K562 (cell line): ENCODE measurements at regions of chr15 and their contacts with region 1.

Region 1: GRCh38 chr15:50315814-50316630 is 39.0 kb downstream of the GABPB1 start:
- DNase-seq: peak in 3 of 4 experiments; percentile 16 to 59 (median 19)
- ATAC-seq: peak; percentile 80
- H3K4me3 ChIP-seq: no peak overlapping the region
- H3K27ac ChIP-seq: no peak overlapping the region
- H3K4me1 ChIP-seq: no peaks in the 10 kb centered on the region
- H3K27me3 ChIP-seq: no peaks in the 10 kb centered on the region
- CTCF ChIP-seq: peak; percentile 49 to 78 (median 59); a peak in 5 of 6 replicates
- EP300 ChIP-seq: no peak
- POLR2A ChIP-seq: no peak
- RAD21 ChIP-seq: peak; percentile 91 to 92

Region 2: DNA sequence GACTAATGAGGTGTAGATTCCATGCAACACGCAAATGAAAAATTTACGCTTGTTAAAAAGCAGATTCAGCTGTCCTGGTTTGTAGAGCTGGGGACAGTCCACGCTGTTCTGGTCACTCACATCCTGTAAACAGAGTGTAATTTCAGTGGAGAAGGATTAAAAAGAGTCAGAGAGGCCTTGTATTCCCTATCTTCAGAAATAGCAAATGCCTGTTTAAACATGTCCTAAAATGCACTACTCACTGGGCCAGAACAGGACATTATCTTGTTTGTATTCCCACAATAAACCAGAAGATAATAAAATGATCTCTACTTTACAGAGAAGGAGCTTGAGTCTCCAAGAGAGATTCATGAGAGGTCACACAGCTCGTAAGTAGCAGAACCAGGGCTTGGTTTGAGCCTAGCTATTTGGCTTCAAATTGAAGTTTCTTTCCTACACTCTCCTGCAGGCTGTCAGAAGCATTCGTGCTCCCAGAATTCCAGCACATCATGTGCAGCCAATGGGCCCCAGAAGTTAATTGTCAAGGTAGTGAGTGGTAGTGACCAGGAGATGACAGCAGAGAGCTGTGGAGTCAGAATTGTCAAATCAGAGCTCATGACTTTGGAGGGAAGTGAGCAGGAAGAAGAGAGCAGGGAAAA is 439.5 kb before region 1 on chr15:
- CTCF ChIA-PET with region 1: no interaction called
- POLR2A ChIA-PET with region 1: no interaction called
- in situ Hi-C with region 1: loop called (anchors 25 kb)
- intact Hi-C with region 1: no loop called
- DNase-seq: peak in 2 of 4 experiments; percentile 6 to 8
- ATAC-seq: peak; percentile 40; the same call in 2 of the 3 replicates
- H3K4me3 ChIP-seq: no peak overlapping the region
- H3K27ac ChIP-seq: no peak overlapping the region
- H3K4me1 ChIP-seq: no peaks in the 10 kb centered on the region
- H3K27me3 ChIP-seq: no peaks in the 10 kb centered on the region
- CTCF ChIP-seq: peak; percentile 33 to 52 (median 38); a peak in 4 of 6 replicates
- EP300 ChIP-seq: no peak
- POLR2A ChIP-seq: no peak
- RAD21 ChIP-seq: peak; percentile 60 to 69

Region 3: GRCh38 chr15:50182219-50183013 is 133.6 kb before region 1 on chr15:
- CTCF ChIA-PET with region 1: interaction called, 4 read pairs
- POLR2A ChIA-PET with region 1: no interaction called
- in situ Hi-C with region 1: no loop called
- intact Hi-C with region 1: loop called (anchors 2 kb)
- DNase-seq: peak in 3 of 4 experiments; percentile 40 to 50 (median 46)
- ATAC-seq: peak; percentile 80
- H3K4me3 ChIP-seq: peak overlapping the region; percentile 65
- H3K27ac ChIP-seq: peak overlapping the region; percentile 38; the same call in 1 of the 3 replicates
- H3K4me1 ChIP-seq: peaks cover 16 to 21% of the 10 kb centered on the region in 2 experiments; a peak in 4 of 5 replicates
- H3K27me3 ChIP-seq: no peaks in the 10 kb centered on the region
- CTCF ChIP-seq: no peak
- EP300 ChIP-seq: no peak
- POLR2A ChIP-seq: no peak
- RAD21 ChIP-seq: no peak

Region 4: DNA sequence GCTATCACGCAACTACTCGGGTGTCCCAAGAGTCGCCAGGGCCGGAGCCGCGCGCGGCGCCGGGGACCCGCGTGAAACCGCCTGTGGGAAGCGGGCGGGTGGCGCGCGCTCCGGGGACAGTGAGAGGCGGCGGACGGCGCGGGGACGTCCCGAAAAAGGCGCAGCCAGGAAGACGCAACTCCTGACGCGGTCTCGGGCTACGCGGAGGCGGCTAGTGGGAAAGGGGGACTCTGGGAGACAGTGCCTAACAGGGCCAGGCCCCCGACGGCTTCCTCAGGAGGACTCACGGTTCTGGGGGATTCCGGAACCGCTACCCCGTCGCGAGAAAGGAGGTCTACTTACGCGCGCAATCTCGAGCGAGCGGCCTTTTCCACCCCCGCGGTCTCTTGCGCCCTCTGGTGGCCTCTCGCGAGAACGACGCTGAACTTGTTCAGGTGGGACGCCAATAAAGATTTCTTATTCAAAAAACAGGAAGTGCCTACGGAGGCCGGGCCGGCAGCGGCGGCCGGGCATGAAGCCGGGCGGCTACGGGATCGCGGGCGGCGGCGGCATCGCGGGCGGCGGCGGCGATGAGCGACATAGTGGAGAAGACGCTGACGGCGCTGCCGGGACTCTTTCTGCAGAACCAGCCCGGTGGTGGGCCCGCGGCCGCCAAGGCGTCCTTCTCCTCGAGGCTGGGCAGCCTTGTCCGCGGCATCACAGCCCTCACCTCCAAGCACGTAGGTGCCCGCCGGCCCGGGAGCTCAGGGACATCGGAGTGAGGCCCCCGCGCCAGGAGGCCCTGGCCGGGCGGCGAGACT is 592.4 kb after region 1 on chr15 and contains the start of gene AP4E1:
- CTCF ChIA-PET with region 1: no interaction called
- POLR2A ChIA-PET with region 1: no interaction called
- in situ Hi-C with region 1: no loop called
- intact Hi-C with region 1: loop called (anchors 10 kb)
- DNase-seq: peak; percentile 76 to 95 (median 79)
- ATAC-seq: peak; percentile 82
- H3K4me3 ChIP-seq: peak within 1 kb of the TSS; percentile 98
- H3K27ac ChIP-seq: peak within 1 kb of the TSS; percentile 92
- H3K4me1 ChIP-seq: peaks cover 0 to 12% of the 10 kb centered on the region in 2 experiments; a peak in 2 of 5 replicates
- H3K27me3 ChIP-seq: no peaks in the 10 kb centered on the region
- CTCF ChIP-seq: peak; percentile 91 to 97 (median 93)
- EP300 ChIP-seq: peak; percentile 67
- POLR2A ChIP-seq: peak; percentile 88
- RAD21 ChIP-seq: peak; percentile 87 to 96
- polyA plus RNA-seq, gene AP4E1: 1.3 to 2.2 TPM